ENCODE measurements at regions of chr11 and their contacts with region 1.

Region 1: DNA sequence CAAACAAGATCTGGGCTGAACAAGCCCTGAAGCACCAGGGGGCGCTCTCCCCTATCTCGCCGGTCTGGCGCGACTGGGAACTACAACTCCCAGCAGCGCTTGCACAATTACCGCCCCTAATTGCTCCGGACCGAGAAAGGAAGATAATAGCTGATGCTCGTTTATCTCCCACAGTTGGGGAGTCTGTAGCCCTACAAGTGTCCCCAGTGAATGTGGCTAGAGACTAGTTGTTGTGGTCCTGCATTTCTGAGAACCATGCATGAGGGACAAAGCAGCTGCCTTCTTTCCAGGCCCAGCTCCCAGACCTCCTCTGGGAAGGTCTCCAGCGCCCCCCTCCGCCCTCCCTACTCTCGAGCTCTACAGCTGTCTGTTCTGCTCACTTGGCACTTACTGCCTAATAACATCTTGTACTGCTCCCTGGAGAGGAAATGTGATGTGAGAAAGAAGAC is 34.4 kb downstream of the NRXN2 start:
- DNase-seq: peak; percentile 50
- H3K4me3 ChIP-seq: peak overlapping the region; percentile 59
- H3K27ac ChIP-seq: no peak overlapping the region
- H3K27me3 ChIP-seq: peaks cover 48% of the 10 kb centered on the region
- CTCF ChIP-seq: peak; percentile 86

Region 2: DNA sequence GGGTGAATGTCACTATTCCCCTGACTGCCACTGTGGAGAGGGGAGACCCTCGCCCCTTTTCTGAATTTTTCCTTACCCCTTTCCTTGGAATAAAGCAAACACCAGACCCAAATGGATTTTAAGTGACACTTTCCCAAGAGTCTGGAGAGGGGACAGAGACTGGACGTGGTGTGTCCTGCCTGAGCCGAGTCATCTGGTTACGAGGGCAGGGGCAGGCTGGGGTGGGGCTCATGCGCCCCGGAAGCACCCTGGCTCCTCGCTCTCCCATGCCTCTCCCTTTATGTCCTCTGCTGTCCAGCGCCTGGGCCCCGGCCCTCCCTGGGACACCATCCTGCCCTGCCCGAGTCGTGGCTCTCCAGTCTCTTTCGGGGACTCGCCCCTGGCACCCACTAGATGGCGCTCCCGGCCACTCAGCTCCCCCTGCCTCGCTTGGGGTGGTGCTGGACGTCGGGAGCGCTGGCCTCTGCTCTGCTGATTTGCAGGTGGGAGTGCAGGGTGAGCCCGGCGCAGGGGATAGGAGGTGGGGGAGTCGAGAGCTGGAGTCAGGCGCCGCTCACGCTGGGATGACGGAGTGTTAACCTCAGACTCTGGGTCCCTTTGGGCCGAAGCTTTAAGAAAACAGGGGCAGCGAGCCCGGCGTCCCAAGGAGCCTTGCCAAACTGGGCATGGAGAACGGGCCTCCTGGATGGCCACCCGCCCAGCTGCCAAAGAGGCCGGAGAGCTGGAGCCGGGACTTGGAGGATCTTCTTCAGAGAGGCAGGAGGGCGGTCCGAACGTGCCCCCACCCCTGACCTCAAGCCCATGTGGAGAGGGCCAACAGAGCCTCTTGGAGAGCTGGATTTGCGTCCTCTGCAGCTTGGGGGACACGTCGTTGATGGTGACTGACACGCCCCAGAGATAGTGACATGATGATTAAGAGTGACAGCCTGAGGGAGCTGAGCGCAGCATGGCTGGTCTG is 239.7 kb before region 1 on chr11:
- CTCF ChIA-PET with region 1: interaction called, 10 read pairs
- POLR2A ChIA-PET with region 1: no interaction called
- DNase-seq: no peak
- H3K4me3 ChIP-seq: 0 out of 2 replicates have a peak overlapping the region, but pooled peaks have one; percentile 17
- H3K27ac ChIP-seq: no peak overlapping the region
- H3K27me3 ChIP-seq: peaks cover 36% of the 10 kb centered on the region
- CTCF ChIP-seq: peak; percentile 83

Region 3: DNA sequence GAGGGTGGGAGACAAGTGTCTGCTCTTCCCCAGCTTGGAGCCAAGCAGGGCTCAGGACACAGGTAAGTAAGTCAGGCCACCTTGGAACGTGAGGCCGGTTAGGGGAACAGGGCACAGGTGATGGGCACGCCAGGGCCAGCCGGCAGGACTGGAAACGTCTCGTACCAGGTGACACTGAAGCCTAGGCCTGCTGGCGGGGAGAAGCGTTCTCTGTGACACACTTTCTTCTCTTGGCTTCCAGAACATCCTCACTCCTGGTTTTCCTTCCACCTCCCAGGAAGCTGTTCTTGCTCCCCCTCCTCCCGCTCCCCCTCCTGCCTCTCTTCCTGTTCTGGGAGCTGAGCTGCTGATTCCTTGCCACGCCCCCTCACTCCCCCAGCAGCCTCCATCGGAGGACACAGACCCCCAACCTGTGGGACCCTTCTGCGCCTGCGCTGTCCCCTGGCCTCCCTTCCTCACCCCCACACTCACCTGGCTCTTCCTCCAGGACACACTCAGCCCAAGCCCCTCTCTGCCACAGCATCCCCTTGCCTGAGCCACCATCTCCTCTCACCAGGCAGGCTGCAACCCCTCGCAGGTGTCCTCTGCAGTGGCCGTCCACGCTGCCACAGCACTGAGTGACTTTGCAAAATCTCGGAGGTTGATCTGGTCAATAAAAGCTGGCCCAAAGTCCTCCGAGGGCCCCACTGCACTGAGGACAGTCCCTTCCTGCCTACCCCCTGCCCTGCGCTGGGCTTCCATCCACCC is 128.7 kb before region 1 on chr11:
- CTCF ChIA-PET with region 1: no interaction called
- POLR2A ChIA-PET with region 1: no interaction called
- DNase-seq: no peak
- H3K4me3 ChIP-seq: no peak overlapping the region
- H3K27ac ChIP-seq: no peak overlapping the region
- H3K27me3 ChIP-seq: peaks cover 17% of the 10 kb centered on the region
- CTCF ChIP-seq: no peak

Region 4: DNA sequence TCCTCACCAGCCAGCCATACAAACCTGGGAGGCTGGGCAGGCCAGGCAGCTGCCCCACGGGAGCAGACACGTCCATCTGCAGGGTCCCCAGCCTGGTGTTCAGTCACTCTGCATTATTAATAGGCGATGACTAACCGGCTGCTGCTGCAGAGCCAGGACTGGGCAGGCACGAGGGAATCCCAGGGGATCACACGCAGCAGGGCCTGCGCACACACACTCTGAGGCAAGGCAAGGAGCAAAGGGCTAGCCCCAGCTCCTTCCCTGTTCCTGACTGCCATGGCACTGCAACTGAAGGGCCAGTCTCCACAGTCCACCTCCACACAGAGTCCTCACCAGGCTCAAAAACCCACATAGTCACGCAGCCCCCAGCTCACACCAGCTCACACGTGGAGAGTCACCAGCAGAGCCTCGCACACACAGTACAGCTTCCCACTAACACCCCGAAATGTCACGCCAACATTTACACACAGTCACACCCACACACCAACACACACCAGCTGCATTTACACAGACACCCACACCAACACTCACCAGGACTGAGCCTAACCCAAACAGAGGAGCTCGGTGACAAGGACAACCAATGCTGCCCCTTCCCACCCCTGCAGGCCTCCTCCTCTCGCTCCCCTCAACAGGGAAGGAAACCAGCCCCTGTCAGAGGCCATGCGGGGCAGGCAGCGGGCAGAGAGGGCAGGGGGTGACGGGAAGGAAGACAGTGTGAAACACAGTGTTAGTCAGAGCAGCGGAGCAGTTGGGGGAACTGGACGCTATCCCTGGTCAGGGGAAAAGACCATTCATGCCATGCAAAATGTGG is 12.9 kb before region 1 on chr11:
- CTCF ChIA-PET with region 1: interaction called, 30 read pairs
- POLR2A ChIA-PET with region 1: no interaction called
- DNase-seq: no peak
- H3K4me3 ChIP-seq: no peak overlapping the region
- H3K27ac ChIP-seq: no peak overlapping the region
- H3K27me3 ChIP-seq: peaks cover 61% of the 10 kb centered on the region
- CTCF ChIP-seq: no peak

Region 5: DNA sequence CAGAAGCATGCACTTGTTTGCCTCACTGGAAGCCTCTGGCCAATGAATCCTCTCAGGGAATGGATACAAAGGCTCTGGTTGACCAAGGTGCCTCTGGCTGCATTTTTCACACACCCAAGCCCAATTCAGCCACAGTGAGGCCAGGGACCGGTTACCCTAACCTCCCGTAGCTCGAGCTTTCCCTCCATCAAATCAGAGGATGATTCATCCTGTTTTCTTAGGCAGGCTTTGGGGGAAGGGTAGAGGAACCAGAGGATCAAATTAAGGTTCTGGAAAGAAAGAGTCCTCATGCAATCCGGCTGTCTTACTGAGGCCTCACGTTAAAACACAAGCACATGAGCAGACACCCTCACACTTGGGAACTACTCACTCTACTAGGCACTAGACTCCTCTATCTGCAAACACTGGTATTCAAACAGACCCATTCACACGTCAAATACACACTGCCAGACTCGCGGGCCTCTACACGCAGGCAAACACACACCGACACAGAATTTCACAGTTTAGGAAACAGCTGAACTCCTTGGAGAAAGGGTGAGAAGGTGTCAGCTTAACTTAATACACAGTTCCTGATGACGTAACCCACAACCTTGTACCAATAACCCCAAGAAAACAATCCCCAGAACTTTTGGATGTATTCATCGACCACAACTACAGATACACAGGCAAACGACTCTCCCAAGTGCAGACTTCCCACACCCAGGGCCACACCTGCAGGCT is 22.0 kb after region 1 on chr11:
- CTCF ChIA-PET with region 1: interaction called, 29 read pairs
- POLR2A ChIA-PET with region 1: interaction called, 4 read pairs
- DNase-seq: no peak
- H3K4me3 ChIP-seq: no peak overlapping the region
- H3K27ac ChIP-seq: no peak overlapping the region
- H3K27me3 ChIP-seq: peaks cover 48% of the 10 kb centered on the region
- CTCF ChIP-seq: no peak

Region 6: GRCh38 chr11:64726211-64726641 is 37.7 kb after region 1 on chr11:
- CTCF ChIA-PET with region 1: interaction called, 11 read pairs
- POLR2A ChIA-PET with region 1: no interaction called
- DNase-seq: no peak
- H3K4me3 ChIP-seq: no peak overlapping the region
- H3K27ac ChIP-seq: no peak overlapping the region
- H3K27me3 ChIP-seq: peaks cover 33% of the 10 kb centered on the region
- CTCF ChIP-seq: no peak

Region 7: GRCh38 chr11:64935359-64936081 is 247.0 kb after region 1 on chr11 and contains the start of gene GPHA2:
- CTCF ChIA-PET with region 1: no interaction called
- POLR2A ChIA-PET with region 1: no interaction called
- DNase-seq: no peak
- H3K4me3 ChIP-seq: no peak within 1 kb of the TSS
- H3K27ac ChIP-seq: peak within 1 kb of the TSS; percentile 21
- H3K27me3 ChIP-seq: peaks cover 3% of the 10 kb centered on the region
- CTCF ChIP-seq: peak; percentile 20; the same call in 1 of the 2 replicates
- polyA plus RNA-seq, gene GPHA2: not detected in 2 replicates

Measured in AG04450 (cell line).